BJ (cell line): ENCODE measurements at regions of chr12 and their contacts with region 1.

Region 1: GRCh38 chr12:6735448-6736191 is 11.8 kb downstream of the COPS7A start:
- DNase-seq: no peak
- H3K4me3 ChIP-seq: no peak overlapping the region
- H3K27me3 ChIP-seq: no peaks in the 10 kb centered on the region
- CTCF ChIP-seq: peak; percentile 76

Region 2: GRCh38 chr12:6723607-6724396 is 11.8 kb before region 1 on chr12 and contains the start of gene COPS7A:
- CTCF ChIA-PET with region 1: interaction called, 27 read pairs
- POLR2A ChIA-PET with region 1: no interaction called
- DNase-seq: peak; percentile 93
- H3K4me3 ChIP-seq: peak within 1 kb of the TSS; percentile 52
- H3K27me3 ChIP-seq: no peaks in the 10 kb centered on the region
- CTCF ChIP-seq: no peak
- polyA plus RNA-seq, gene COPS7A: 128 and 200 TPM in 2 replicates

Region 3: DNA sequence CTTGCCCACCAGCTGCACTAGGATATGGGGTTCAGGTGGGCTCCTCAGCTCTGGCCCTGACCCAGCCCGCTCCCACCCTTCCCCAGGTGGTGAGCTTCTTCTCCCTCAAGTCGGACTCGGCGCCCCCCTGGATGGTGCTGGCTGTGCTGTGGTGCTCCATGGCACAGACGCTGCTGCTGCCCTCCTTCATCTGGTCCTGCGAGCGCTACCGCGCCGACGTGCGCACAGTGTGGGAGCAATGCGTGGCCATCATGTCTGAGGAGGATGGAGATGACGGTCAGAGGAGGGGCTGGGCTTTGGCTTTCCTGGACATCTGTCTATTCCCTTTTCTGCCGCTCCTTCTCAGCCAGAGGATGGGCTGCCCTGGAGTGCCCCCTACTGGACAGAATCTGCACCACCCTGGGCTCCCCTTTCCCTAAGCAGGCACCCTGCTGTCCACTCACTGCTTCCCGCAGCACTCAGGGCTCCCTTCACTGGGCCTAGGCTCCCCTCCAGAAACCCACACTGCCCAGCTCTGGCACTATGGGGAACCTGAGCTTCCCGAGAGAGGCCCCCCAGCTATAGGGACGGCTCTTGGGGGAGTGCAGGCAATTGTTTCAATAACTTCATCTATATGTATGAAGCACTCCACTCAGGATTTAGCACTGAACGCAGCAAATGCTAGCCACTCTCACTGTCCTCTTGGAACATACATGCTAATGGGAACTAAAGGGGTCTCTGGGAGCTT is 89.9 kb after region 1 on chr12:
- CTCF ChIA-PET with region 1: interaction called, 22 read pairs
- POLR2A ChIA-PET with region 1: no interaction called
- DNase-seq: no peak
- H3K4me3 ChIP-seq: peak overlapping the region; percentile 32
- H3K27me3 ChIP-seq: peaks cover 3% of the 10 kb centered on the region; the same call in 1 of the 2 replicates
- CTCF ChIP-seq: peak; percentile 97